GM12878 (cell line): ENCODE measurements at regions of chr3 and their contacts with region 1.

Region 1: DNA sequence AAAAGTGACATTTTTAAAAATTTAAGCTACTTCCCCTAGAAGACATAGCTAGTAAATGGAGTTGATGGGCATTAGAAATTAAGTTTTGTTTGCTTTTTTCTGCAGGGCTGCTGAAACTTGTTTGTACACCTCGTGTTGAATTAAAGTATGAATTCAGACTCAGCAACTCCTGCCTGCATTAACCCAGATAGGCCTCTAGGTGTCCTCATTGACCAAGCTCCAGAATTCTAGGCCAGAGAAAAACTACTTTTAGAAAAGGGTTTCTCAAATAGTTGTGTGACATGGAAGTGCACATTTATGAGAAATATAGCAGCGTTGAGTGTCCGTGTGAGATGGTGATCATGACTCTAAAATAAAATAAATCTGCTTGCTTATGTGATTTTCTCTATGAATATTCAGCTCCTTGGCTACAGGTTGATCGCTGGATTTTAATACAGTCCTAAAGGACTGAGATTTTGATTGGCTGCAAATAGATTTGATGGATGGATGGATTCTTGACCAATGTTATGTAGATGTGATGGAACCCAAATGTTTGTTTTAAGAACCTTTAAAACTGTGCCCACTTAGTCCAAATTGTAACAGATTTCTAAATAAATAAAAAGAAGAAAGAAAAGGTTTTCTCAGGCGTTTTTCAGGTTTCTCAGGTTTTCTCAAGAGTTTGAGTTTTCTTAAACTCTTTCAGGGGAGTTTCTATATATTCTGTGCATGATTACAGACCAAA is 39.4 kb upstream of the LMOD3 start:
- DNase-seq: peak; percentile 25
- ATAC-seq: peak; percentile 83
- H3K4me3 ChIP-seq: no peak overlapping the region
- H3K27ac ChIP-seq: no peak overlapping the region
- H3K4me1 ChIP-seq: no peaks in the 10 kb centered on the region
- H3K27me3 ChIP-seq: no peaks in the 10 kb centered on the region
- CTCF ChIP-seq: peak; percentile 89 to 95 (median 94); a peak in 5 of 6 replicates
- EP300 ChIP-seq: no peak
- POLR2A ChIP-seq: no peak
- RAD21 ChIP-seq: peak; percentile 100

Region 2: DNA sequence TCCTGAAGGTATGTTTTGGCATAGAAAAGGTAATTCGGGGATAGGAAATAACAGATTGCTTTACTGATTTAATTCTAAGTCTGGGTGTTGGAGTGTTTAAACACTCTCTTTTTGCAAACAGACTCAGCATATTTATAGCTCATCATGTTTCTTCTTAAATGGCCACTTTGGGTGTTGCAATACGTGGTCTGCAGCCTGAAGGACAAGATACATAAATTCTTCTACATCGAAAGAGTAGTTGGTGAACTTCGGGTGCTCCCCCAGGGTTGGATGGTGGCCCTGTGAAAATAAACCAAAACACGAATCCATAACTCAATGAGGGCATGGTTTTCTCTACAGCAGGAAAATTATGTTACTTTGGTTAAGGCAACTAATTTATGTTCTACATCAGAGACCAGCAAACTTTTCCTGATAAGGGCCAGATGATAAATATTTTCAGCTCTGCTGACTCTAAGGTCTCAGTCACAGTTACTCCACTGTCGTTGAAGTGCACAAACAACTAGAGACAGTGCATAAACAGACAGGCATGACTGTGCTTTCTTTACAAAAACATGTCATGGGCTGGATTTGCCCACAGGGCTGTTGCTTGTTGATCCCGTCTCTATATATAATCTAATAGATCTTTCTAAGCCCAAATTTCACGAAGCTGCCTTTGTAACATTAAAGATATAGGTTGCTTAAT is 184.1 kb before region 1 on chr3:
- CTCF ChIA-PET with region 1: no interaction called
- POLR2A ChIA-PET with region 1: no interaction called
- RAD21 ChIA-PET with region 1: no interaction called
- SMC1A ChIA-PET with region 1: no interaction called
- in situ Hi-C with region 1: no loop called
- intact Hi-C with region 1: no loop called
- DNase-seq: no peak
- ATAC-seq: no peak
- H3K4me3 ChIP-seq: no peak overlapping the region
- H3K27ac ChIP-seq: no peak overlapping the region
- H3K4me1 ChIP-seq: no peaks in the 10 kb centered on the region
- H3K27me3 ChIP-seq: no peaks in the 10 kb centered on the region
- CTCF ChIP-seq: no peak
- EP300 ChIP-seq: no peak
- POLR2A ChIP-seq: no peak
- RAD21 ChIP-seq: no peak

Region 3: DNA sequence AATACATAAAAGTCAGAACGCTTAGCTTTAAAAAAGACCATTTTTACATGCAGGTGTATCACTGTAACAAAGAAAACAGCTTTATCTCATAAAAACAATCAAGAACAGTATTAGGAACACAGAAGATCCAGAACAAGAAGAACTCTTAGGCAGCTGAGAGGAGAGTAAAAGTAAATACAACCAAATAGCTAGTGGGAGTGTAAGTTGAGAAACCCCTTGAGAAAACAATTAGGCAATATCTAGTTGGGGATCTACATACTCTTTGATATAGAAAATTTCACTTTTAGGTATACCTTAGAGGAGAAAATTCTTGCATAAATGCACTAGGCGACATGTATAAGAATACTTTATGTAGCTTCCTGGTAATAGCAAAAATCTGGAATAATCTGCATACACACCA is 117.1 kb before region 1 on chr3:
- CTCF ChIA-PET with region 1: no interaction called
- POLR2A ChIA-PET with region 1: no interaction called
- RAD21 ChIA-PET with region 1: no interaction called
- SMC1A ChIA-PET with region 1: no interaction called
- in situ Hi-C with region 1: no loop called
- intact Hi-C with region 1: no loop called
- DNase-seq: no peak
- ATAC-seq: no peak
- H3K4me3 ChIP-seq: no peak overlapping the region
- H3K27ac ChIP-seq: no peak overlapping the region
- H3K4me1 ChIP-seq: no peaks in the 10 kb centered on the region
- H3K27me3 ChIP-seq: no peaks in the 10 kb centered on the region
- CTCF ChIP-seq: no peak
- EP300 ChIP-seq: no peak
- POLR2A ChIP-seq: no peak
- RAD21 ChIP-seq: no peak

Region 4: GRCh38 chr3:69120879-69121464 is 40.8 kb before region 1 on chr3:
- CTCF ChIA-PET with region 1: interaction called, 117 read pairs
- POLR2A ChIA-PET with region 1: no interaction called
- RAD21 ChIA-PET with region 1: interaction called, 29 read pairs
- SMC1A ChIA-PET with region 1: interaction called, 45 read pairs
- in situ Hi-C with region 1: no loop called
- intact Hi-C with region 1: no loop called
- DNase-seq: peak; percentile 48
- ATAC-seq: peak; percentile 96
- H3K4me3 ChIP-seq: no peak overlapping the region
- H3K27ac ChIP-seq: no peak overlapping the region
- H3K4me1 ChIP-seq: no peaks in the 10 kb centered on the region
- H3K27me3 ChIP-seq: 0 out of 4 replicates have a peak, but pooled peaks cover 0 to 3% of the 10 kb centered on the region in 2 experiments
- CTCF ChIP-seq: peak; percentile 91 to 98 (median 95); a peak in 5 of 6 replicates
- EP300 ChIP-seq: no peak
- POLR2A ChIP-seq: no peak
- RAD21 ChIP-seq: peak; percentile 85

Region 5: DNA sequence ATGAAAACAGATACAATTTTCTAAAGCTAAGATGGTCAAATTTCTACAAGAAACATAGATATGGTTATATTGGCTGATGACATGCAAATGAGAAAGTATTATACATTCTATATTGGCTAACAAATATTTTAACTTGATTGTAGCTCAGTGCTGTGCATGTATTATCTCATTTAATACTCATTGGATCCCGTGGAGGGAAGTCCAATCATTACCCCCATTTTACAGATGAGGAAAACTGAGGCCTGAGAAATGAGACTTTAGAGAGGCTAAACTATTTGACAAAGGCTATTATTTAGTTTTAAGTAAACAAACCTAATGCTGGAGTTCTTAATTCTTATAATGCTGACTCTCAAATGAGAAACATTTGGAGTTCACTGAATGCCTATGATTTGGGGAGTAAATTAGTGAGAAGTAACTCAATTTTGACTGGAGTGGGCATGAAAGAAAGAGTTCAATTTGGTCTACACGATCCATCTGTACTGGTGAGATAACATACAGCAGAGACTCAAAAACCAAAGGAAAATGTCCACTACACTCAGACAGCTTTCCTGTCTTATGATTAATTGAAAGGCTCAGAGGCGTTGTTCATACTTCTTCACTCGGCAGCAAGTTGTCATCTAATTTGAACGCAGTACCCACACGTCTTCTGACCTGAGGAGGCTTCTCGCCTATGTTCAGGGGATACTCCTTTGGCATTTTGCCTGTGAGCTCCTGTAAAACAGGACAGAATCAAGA is 32.9 kb after region 1 on chr3:
- CTCF ChIA-PET with region 1: interaction called, 16 read pairs
- POLR2A ChIA-PET with region 1: no interaction called
- RAD21 ChIA-PET with region 1: interaction called, 17 read pairs
- SMC1A ChIA-PET with region 1: interaction called, 48 read pairs
- in situ Hi-C with region 1: no loop called
- intact Hi-C with region 1: no loop called
- DNase-seq: no peak
- ATAC-seq: no peak
- H3K4me3 ChIP-seq: no peak overlapping the region
- H3K27ac ChIP-seq: no peak overlapping the region
- H3K4me1 ChIP-seq: no peaks in the 10 kb centered on the region
- H3K27me3 ChIP-seq: no peaks in the 10 kb centered on the region
- CTCF ChIP-seq: no peak
- EP300 ChIP-seq: no peak
- POLR2A ChIP-seq: no peak
- RAD21 ChIP-seq: no peak

Region 6: DNA sequence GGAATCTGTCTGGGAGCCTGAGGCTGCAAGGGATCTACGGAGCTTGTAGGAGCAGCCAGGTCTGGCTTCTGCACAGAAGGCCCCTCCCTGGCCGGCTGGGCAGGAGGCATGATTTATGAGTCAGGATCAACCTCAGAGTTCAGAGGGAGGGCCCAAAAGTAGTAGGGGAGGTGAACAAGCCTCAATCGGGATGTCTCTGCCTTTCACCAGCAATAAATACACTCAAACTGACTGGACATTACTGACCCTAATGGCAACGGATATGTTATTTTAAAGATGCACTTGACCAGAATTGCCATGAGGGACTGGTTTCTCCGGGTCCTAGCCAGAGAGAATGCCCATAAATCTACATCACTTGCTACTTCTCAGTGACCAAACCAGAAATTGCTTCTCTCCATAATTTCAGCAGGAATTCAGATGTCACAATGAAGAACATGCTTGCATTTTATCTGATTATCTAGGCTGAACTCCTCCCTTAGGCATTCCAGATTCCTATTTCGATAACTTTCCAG is 70.2 kb after region 1 on chr3:
- CTCF ChIA-PET with region 1: interaction called, 161 read pairs
- POLR2A ChIA-PET with region 1: interaction called, 4 read pairs
- RAD21 ChIA-PET with region 1: interaction called, 77 read pairs
- SMC1A ChIA-PET with region 1: interaction called, 120 read pairs
- in situ Hi-C with region 1: no loop called
- intact Hi-C with region 1: no loop called
- DNase-seq: no peak
- ATAC-seq: no peak
- H3K4me3 ChIP-seq: no peak overlapping the region
- H3K27ac ChIP-seq: no peak overlapping the region
- H3K4me1 ChIP-seq: no peaks in the 10 kb centered on the region
- H3K27me3 ChIP-seq: no peaks in the 10 kb centered on the region
- CTCF ChIP-seq: no peak
- EP300 ChIP-seq: no peak
- POLR2A ChIP-seq: no peak
- RAD21 ChIP-seq: no peak

Region 7: GRCh38 chr3:69288161-69288895 is 126.6 kb after region 1 on chr3:
- CTCF ChIA-PET with region 1: interaction called, 17 read pairs
- POLR2A ChIA-PET with region 1: no interaction called
- RAD21 ChIA-PET with region 1: interaction called, 15 read pairs
- SMC1A ChIA-PET with region 1: interaction called, 37 read pairs
- in situ Hi-C with region 1: no loop called
- intact Hi-C with region 1: no loop called
- DNase-seq: no peak
- ATAC-seq: peak; percentile 98
- H3K4me3 ChIP-seq: no peak overlapping the region
- H3K27ac ChIP-seq: no peak overlapping the region
- H3K4me1 ChIP-seq: peaks cover 12% of the 10 kb centered on the region
- H3K27me3 ChIP-seq: no peaks in the 10 kb centered on the region
- CTCF ChIP-seq: no peak
- EP300 ChIP-seq: 0 out of 4 replicates have a peak, but pooled peaks of 1 of the 2 experiments have one; percentile 32
- POLR2A ChIP-seq: no peak
- RAD21 ChIP-seq: no peak

Region 8: DNA sequence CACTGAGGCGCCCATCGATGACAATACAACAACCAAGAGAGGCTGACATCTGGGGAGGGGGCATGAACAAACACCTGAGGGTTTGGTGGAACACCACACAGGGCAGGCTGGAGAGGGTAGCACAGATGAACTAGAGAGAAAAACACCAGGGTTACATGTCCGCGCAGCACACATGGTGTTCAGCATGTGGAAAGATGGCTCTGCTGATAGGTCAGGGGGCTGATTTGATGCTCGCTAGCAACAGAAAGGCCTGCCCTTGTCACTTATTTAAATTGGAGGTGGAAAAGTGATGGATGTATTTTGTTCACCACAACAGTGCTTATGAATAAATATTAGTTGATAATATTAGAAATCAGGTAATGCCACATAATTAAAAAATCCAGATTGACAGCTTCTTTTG is 156.7 kb after region 1 on chr3:
- CTCF ChIA-PET with region 1: interaction called, 625 read pairs
- POLR2A ChIA-PET with region 1: no interaction called
- RAD21 ChIA-PET with region 1: interaction called, 379 read pairs
- SMC1A ChIA-PET with region 1: interaction called, 505 read pairs
- in situ Hi-C with region 1: no loop called
- intact Hi-C with region 1: loop called (anchors 5 kb)
- DNase-seq: no peak
- ATAC-seq: no peak
- H3K4me3 ChIP-seq: no peak overlapping the region
- H3K27ac ChIP-seq: no peak overlapping the region
- H3K4me1 ChIP-seq: peaks cover 7% of the 10 kb centered on the region; the same call in 1 of the 2 replicates
- H3K27me3 ChIP-seq: no peaks in the 10 kb centered on the region
- CTCF ChIP-seq: no peak
- EP300 ChIP-seq: no peak
- POLR2A ChIP-seq: no peak
- RAD21 ChIP-seq: no peak

Region 9: GRCh38 chr3:69439643-69440270 is 278.0 kb after region 1 on chr3:
- CTCF ChIA-PET with region 1: interaction called, 40 read pairs
- POLR2A ChIA-PET with region 1: no interaction called
- RAD21 ChIA-PET with region 1: interaction called, 15 read pairs
- SMC1A ChIA-PET with region 1: interaction called, 12 read pairs
- in situ Hi-C with region 1: no loop called
- intact Hi-C with region 1: no loop called
- DNase-seq: peak; percentile 16
- ATAC-seq: peak; percentile 31
- H3K4me3 ChIP-seq: no peak overlapping the region
- H3K27ac ChIP-seq: no peak overlapping the region
- H3K4me1 ChIP-seq: 0 out of 2 replicates have a peak, but pooled peaks cover 2% of the 10 kb centered on the region
- H3K27me3 ChIP-seq: no peaks in the 10 kb centered on the region
- CTCF ChIP-seq: peak; percentile 50 to 64 (median 54)
- EP300 ChIP-seq: no peak
- POLR2A ChIP-seq: no peak
- RAD21 ChIP-seq: peak; percentile 53

Region 10: GRCh38 chr3:69739204-69740102 is 577.7 kb after region 1 on chr3 and contains the start of gene MITF:
- CTCF ChIA-PET with region 1: no interaction called
- POLR2A ChIA-PET with region 1: no interaction called
- RAD21 ChIA-PET with region 1: no interaction called
- SMC1A ChIA-PET with region 1: no interaction called
- in situ Hi-C with region 1: no loop called
- intact Hi-C with region 1: no loop called
- DNase-seq: peak; percentile 26
- ATAC-seq: peak; percentile 99
- H3K4me3 ChIP-seq: peak within 1 kb of the TSS; percentile 72
- H3K27ac ChIP-seq: no peak within 1 kb of the TSS
- H3K4me1 ChIP-seq: no peaks in the 10 kb centered on the region
- H3K27me3 ChIP-seq: peaks cover 0 to 3% of the 10 kb centered on the region in 2 experiments
- CTCF ChIP-seq: no peak
- EP300 ChIP-seq: no peak
- POLR2A ChIP-seq: no peak
- RAD21 ChIP-seq: no peak
- polyA plus RNA-seq, gene MITF: 0.02 TPM in 1 of 2 experiments, not detected in the other